ENCODE measurements at regions of chr18 and their contacts with region 1.

Region 1: DNA sequence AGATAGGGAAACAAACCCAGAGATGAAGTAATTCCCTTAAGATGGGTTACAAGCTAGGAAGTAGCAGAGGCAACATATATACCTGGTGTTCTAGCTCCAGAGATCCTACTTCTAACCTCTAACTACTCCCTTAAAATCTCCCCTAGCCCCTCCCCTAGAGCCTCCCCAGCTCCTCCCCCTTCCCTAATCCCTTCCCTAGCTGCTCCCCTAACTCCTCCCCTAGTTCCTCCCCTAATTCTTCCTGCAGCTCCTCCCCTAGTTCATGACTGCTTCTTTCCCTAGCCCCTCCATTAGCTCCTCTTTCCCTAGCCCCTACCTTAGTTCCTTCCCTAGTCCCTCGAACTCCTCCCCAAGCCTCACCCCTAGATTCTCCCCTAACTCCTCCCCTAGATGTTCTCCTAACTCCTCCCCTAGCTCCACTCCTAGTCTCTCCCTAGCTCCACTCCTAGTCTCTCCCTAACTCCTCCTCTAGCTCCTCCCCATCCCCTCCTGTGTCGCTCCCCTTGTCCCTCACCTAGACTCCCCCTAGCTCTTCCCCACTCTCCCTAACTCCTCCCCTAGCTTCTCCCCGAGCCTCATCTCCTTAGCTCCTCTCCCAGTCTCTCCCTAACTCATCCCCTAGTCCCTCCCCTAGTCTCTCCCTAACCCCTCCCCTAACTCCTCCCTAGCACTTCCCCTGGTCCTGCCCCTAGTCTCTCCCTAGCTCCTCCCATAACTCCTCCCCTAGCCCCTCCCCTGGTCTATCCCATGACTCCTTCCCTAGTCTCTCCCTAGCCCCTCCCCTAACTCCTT is 108.9 kb downstream of the CD226 start:
- DNase-seq: no peak
- CTCF ChIP-seq: no peak

Region 2: DNA sequence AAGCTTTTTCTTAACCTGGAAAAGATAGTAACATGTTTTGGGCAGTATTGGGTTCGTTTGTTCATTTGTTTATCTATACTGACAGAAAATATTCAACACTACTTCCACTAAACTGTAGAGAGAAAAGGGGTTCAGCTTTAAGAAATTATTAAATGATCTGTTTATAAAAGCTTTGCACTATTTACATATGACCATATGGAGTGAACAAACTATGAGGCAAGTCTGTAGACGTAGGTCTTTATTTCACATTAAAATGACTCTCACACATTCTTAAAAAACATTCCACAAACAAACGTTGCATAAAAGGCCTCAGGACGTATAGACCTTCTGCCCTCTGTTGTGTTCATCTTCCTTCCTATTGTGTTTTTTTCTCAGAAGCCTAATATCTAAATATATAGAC is 14.2 kb after region 1 on chr18:
- CTCF ChIA-PET with region 1: interaction called, 20 read pairs
- POLR2A ChIA-PET with region 1: interaction called, 6 read pairs
- DNase-seq: no peak
- CTCF ChIP-seq: no peak